Left colon (tissue), 2 donors: ENCODE measurements at regions of chr15 and their contacts with region 1.

Region 1: DNA sequence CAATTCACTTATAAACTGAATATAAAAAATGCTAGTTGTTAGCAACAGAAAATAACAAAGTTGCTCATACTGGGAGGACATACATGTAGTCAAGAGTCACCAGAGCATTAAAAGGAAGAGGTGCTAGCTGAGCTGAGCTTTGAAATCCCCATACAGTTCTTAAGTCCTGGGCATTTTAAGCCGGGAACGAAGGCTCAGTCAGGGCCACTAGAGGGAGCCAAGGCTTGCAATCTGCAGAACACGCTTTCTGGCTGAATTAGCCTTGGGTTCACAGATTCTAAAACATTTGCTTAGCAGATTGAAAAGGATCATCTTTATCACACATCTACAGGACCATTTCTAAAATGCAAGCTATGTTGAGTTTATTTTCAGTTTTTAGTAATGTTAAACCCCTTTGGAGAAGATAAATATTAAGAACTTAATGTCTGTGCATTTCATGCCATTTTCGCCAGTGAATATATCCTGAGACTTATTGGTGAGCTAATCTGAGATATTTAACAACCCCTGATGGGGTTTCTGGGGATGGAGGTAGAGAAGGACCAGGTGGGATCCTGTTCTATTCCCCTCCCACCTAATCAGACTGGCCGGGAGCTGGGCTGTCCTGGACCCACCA is 26.3 kb upstream of the MNS1 start:
- DNase-seq: peak; percentile 51 to 81
- ATAC-seq: peak; percentile 51

Region 2: DNA sequence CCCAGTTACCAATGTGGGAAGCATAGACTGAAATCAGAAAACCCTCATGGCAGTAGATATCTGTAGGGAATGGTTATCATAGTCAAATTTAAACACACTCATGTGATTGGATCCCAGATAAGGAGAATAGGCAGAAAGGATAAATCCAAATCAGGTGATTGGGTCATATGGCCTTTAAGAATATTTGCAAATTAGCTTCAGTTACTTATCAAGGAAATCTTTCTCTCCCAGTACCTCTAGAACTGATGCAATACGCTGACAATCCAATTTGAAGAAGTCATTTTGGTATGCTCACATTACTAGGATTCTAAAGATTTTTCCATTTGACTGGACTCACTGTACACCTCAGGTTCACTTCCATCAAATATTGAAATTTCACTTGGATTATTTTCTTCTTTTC is 61.5 kb after region 1 on chr15:
- intact Hi-C with region 1: no loop called
- DNase-seq: no peak
- ATAC-seq: no peak

Region 3: DNA sequence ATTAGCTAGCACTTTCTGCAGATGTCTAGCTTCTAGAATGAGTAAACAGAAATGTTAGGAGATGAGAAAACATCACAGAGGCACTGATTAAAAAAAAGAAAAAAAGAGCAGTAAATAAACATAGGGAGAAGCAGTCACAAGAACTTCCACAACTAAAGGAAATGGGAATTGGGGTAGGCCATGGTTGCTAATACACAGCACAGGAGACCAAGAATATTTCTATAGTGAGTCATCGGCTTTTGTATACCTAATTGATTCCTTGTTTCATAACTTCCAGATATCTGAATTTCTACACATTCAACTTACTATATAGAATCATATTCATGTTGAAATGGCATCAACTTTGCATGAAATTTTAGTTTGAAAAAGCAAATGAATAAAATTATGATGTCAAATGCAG is 380.0 kb after region 1 on chr15:
- intact Hi-C with region 1: loop called in 1 of 2 experiments (anchors 10 kb)
- DNase-seq: no peak
- ATAC-seq: no peak

Region 4: GRCh38 chr15:57259568-57260040 is 768.4 kb after region 1 on chr15:
- intact Hi-C with region 1: no loop called
- DNase-seq: peak; percentile 36 to 65
- ATAC-seq: peak; percentile 95